AG04449 (cell line): ENCODE measurements at regions of chr17 and their contacts with region 1.

Region 1: GRCh38 chr17:45218895-45219661 is 2.6 kb upstream of the FMNL1 start:
- DNase-seq: peak; percentile 37
- H3K4me3 ChIP-seq: peak overlapping the region; percentile 30
- CTCF ChIP-seq: peak; percentile 86

Region 2: GRCh38 chr17:45148183-45149036 is 70.7 kb before region 1 on chr17 and contains the start of gene HEXIM1:
- CTCF ChIA-PET with region 1: interaction called, 13 read pairs
- POLR2A ChIA-PET with region 1: interaction called, 7 read pairs
- DNase-seq: peak; percentile 97
- H3K4me3 ChIP-seq: peak within 1 kb of the TSS; percentile 98
- CTCF ChIP-seq: no peak

Region 3: DNA sequence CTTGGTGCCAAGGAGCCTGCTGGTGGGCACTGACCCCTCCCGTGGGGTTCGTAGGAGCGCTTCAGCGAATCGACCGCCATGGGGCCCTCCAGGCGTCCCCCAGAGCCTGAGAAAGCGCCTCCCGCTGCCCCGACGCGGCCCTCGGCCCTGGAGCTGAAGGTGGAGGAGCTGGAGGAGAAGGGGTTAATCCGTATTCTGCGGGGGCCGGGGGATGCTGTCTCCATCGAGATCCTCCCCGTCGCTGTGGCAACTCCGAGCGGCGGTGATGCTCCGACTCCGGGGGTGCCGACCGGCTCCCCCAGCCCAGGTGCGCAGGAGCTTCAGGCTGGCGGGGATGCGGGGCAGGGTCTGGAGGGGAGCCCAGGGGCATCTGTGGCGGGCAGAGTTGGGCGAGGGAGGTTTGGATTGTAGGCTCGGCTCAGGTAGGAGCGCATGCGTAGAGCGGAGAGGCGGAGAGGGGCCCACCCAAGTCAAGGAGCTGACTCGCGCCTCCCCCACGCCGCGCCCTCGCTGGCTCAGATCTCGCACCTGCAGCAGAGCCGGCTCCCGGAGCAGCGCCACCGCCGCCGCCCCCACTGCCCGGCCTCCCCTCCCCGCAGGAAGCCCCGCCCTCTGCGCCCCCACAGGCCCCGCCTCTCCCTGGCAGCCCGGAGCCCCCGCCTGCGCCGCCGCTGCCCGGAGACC is 22.4 kb after region 1 on chr17:
- CTCF ChIA-PET with region 1: interaction called, 205 read pairs
- POLR2A ChIA-PET with region 1: no interaction called
- DNase-seq: no peak
- H3K4me3 ChIP-seq: peak overlapping the region; percentile 6; the same call in 1 of the 2 replicates
- CTCF ChIP-seq: no peak

Region 4: GRCh38 chr17:45270828-45271418 is 51.8 kb after region 1 on chr17:
- CTCF ChIA-PET with region 1: interaction called, 22 read pairs
- POLR2A ChIA-PET with region 1: no interaction called
- DNase-seq: no peak
- H3K4me3 ChIP-seq: no peak overlapping the region
- CTCF ChIP-seq: peak; percentile 69

Region 5: DNA sequence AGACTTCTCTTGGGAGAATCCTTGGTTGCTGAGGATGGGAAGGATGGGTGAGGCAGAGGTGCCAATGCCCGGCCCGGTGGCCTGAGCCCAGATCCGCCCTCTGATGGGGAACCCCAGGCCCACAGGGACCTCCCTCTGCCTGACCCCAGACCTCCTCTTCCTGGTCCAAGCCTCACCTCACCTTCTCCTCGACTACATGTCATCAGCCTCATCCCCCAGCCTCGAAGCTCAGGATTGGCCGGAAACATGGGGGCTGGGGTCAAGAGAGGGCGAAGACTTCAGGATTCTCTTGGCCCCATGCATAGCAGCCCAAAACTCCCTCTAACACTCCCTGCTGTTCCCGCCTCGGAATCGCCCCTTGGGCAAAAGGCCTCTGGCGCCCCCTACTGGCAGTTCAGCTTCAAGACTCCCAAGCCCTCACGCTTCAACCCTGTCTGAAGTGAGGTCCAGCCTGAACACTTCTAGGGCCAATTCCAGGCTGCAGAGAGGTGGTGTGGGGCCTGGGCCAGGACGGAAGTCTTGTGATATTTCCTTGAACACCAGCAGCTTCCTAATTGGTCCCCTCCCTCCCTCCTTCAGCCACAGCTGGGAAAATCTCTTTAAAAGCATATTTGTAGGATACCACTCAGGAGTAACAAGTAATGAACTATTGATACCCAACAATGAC is 166.4 kb after region 1 on chr17:
- CTCF ChIA-PET with region 1: interaction called, 138 read pairs
- POLR2A ChIA-PET with region 1: no interaction called
- DNase-seq: no peak
- H3K4me3 ChIP-seq: no peak overlapping the region
- CTCF ChIP-seq: peak; percentile 96

Region 6: DNA sequence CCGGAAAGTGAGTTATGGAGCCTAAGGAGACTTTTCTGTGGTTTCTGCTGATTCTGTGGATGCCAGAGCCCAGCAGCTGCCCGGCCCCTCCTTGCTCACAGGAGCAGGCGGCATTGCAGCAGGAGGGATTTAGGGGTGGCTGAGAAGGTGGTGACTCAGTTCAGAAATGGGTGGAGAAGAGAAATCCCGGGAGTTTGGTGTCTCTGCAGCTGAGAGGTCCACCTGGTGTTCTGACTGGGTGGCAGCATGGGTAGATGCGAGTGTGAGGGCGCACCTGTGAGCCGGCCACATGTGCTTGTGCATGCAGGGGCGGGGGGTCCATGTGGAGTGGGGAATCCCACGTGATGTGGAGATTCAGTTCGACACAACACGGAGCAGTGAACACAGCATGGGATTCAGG is 609.5 kb after region 1 on chr17:
- CTCF ChIA-PET with region 1: interaction called, 31 read pairs
- POLR2A ChIA-PET with region 1: no interaction called
- DNase-seq: no peak
- H3K4me3 ChIP-seq: no peak overlapping the region
- CTCF ChIP-seq: no peak